ENCODE measurements at regions of chr15 and their contacts with region 1.

Region 1: DNA sequence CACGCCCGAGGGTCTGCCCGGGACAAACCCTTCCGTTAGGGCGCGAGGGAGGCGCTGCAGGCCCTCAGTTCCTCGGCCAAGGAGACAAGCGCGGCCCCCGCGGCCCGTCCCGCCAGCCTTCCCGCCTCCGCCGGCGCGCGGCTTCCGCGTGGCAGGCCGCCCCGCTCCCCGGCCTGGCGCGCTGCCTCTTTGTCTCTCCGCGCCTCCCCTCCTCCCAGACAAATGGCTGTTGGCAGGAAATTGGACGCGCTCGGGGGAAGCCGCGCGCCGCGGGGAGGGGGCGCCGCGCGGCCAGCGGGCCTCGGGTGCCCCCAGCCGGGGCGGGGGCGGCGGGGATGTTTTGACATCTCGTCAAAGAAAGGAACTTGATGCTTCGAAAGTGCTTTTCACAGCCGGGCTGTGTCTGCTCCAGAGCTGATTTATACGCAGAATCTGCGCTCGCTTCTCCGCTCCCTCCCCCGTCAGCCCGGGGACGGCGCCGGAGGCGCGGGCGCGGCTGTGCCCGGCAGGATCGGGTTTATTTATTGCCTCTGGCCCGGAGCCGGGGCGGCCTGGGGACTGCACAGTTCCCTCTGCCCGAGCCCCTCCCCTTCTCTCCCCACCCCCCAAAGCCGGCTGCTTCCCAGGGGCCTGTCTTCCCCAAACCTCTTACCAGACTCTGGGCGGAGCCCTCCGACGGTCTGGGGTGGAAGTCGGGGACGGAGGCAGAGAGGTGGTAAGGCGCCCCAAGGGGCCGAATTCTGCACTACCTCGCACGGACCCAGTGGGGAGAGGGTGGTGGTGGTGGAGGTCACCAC is 20.7 kb downstream of the SHF start:
- DNase-seq: peak; percentile 66 to 87 (median 76)
- H3K4me3 ChIP-seq: peak overlapping the region; percentile 78
- H3K4me3 Mint-ChIP-seq: peak overlapping the region; percentile 67 to 91 (median 80)
- H3K27ac ChIP-seq: peak overlapping the region; percentile 85
- H3K27ac Mint-ChIP-seq: peak overlapping the region; percentile 67 to 89 (median 84)
- H3K4me1 ChIP-seq: peaks cover 15% of the 10 kb centered on the region
- H3K4me1 Mint-ChIP-seq: peaks cover 9 to 22% (median 21%) of the 10 kb centered on the region in 3 donors
- H3K27me3 ChIP-seq: no peaks in the 10 kb centered on the region
- H3K27me3 Mint-ChIP-seq: no peaks in the 10 kb centered on the region

Region 2: GRCh38 chr15:44956388-44956787 is 210.6 kb before region 1 on chr15 and contains the start of gene TERB2:
- CTCF ChIA-PET with region 1: no interaction called
- POLR2A ChIA-PET with region 1: no interaction called
- DNase-seq: no peak
- H3K4me3 ChIP-seq: no peak within 1 kb of the TSS
- H3K4me3 Mint-ChIP-seq: no peak within 1 kb of the TSS
- H3K27ac ChIP-seq: no peak within 1 kb of the TSS
- H3K27ac Mint-ChIP-seq: peak within 1 kb of the TSS in 1 of 8 donors; percentile 44
- H3K4me1 ChIP-seq: no peaks in the 10 kb centered on the region
- H3K4me1 Mint-ChIP-seq: no peaks in the 10 kb centered on the region
- H3K27me3 ChIP-seq: no peaks in the 10 kb centered on the region
- H3K27me3 Mint-ChIP-seq: peaks cover 3 to 4% of the 10 kb centered on the region in 2 donors
- total RNA-seq, gene TERB2: not detected

Region 3: GRCh38 chr15:45179221-45179985 is 12.4 kb after region 1 on chr15:
- CTCF ChIA-PET with region 1: interaction called, 19 read pairs
- POLR2A ChIA-PET with region 1: interaction called, 4 read pairs
- DNase-seq: peak; percentile 33 to 73 (median 38)
- H3K4me3 ChIP-seq: no peak overlapping the region
- H3K4me3 Mint-ChIP-seq: no peak overlapping the region
- H3K27ac ChIP-seq: no peak overlapping the region
- H3K27ac Mint-ChIP-seq: peak overlapping the region in 4 of 8 donors; percentile 16 to 40 (median 22)
- H3K4me1 ChIP-seq: peaks cover 7% of the 10 kb centered on the region
- H3K4me1 Mint-ChIP-seq: peaks cover 11 to 15% (median 14%) of the 10 kb centered on the region in 3 donors
- H3K27me3 ChIP-seq: no peaks in the 10 kb centered on the region
- H3K27me3 Mint-ChIP-seq: no peaks in the 10 kb centered on the region

Region 4: DNA sequence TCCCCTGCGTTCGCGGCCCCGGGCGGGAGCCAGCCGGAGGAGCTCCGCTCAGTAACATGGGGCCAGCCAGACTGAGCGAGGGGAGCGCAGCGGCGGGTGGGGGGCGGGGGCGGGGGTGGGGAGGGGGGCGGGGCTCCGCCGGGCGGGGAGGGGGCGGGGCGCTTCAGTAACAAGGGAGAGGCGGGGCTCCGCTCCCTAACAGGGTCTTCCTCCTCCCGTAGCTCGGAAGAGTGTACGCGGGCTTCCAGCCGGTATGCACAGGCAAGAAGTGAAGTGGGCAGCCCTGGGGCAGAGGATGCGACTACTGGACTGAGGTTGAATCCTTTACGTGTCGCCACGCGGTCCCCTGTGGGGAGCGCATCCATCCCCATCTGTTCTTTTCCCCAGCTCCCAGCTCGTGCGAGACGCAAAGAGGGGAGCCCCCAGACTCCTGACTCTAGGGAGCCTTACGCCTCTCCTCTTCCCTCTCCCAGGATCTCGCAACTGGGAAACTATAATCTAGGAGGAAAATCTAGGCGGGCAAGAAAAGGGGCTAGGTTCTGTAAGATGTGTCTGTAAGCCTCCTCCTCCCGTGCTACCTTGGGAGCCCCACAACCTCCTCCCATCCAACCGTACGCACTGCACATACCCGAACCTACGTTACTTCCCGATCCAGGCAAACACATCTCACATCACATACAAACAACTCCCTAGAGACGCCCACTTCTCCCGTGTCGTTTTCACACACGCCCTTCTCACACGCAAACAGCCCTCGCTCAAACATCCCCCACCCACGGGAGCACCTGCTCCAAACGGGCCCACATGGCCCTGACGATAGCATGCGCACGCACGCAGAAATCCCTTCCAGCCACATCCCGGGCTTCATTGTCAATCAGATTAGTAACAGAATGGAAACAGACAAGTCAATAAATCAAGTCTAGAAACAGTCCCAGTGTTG is 21.1 kb after region 1 on chr15 and contains the start of gene SHF:
- CTCF ChIA-PET with region 1: interaction called, 13 read pairs
- POLR2A ChIA-PET with region 1: interaction called, 3 read pairs
- DNase-seq: peak; percentile 44 to 75 (median 53)
- H3K4me3 ChIP-seq: peak within 1 kb of the TSS; percentile 65
- H3K4me3 Mint-ChIP-seq: peak within 1 kb of the TSS; percentile 84 to 96 (median 93)
- H3K27ac ChIP-seq: peak within 1 kb of the TSS; percentile 41
- H3K27ac Mint-ChIP-seq: peak within 1 kb of the TSS; percentile 59 to 96 (median 87)
- H3K4me1 ChIP-seq: peaks cover 11% of the 10 kb centered on the region
- H3K4me1 Mint-ChIP-seq: peaks cover 11 to 21% (median 15%) of the 10 kb centered on the region in 3 donors
- H3K27me3 ChIP-seq: no peaks in the 10 kb centered on the region
- H3K27me3 Mint-ChIP-seq: peaks cover 13 to 14% of the 10 kb centered on the region in 2 donors
- total RNA-seq, gene SHF: 25.4 to 29.5 TPM

Region 5: DNA sequence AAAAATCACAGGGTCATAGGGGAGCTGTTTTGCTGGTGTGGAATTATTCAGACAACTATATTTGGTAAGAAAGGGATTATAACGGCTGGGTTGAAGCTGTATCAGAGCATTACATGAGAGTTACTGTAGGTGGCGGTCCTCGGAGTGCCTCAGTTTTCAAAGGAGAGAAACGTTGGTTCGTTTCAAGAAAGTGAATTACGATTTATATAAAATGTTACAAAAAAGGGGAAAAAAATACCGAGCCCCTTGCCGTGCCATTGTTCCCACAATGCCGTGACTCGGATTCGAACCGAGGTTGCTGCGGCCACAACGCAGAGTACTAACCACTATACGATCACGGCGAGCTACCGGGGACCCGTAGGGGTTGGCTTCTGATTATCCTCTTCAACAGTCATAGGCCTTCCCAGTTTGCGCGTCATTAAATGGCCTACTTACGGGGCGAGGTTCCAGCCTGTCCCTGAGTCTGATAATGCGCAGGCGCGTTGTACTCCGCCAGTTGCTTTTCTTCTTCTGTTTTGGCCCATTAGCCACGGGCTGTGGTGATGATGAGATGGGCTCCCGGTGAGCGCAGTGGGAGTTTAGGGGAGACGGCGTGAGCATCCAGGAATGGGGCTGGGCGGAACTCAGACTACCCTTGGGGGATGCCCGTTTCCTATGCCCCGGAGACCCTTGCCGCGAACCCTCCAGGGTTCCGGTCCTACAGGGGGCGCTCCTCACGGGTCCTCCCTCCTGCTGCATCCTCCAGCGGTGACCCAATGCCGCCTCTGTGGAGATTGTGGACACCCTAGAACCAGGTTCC is 31.5 kb after region 1 on chr15:
- CTCF ChIA-PET with region 1: interaction called, 14 read pairs
- POLR2A ChIA-PET with region 1: interaction called, 14 read pairs
- DNase-seq: peak; percentile 83 to 98 (median 97)
- H3K4me3 ChIP-seq: peak overlapping the region; percentile 94
- H3K4me3 Mint-ChIP-seq: no peak overlapping the region
- H3K27ac ChIP-seq: peak overlapping the region; percentile 94
- H3K27ac Mint-ChIP-seq: peak overlapping the region in 1 of 8 donors; percentile 60
- H3K4me1 ChIP-seq: peaks cover 16% of the 10 kb centered on the region
- H3K4me1 Mint-ChIP-seq: peaks cover 4 to 19% (median 13%) of the 10 kb centered on the region in 3 donors
- H3K27me3 ChIP-seq: no peaks in the 10 kb centered on the region
- H3K27me3 Mint-ChIP-seq: peaks cover 0 to 13% of the 10 kb centered on the region in 2 donors

Region 6: GRCh38 chr15:45205192-45205591 is 38.2 kb after region 1 on chr15:
- CTCF ChIA-PET with region 1: interaction called, 14 read pairs
- POLR2A ChIA-PET with region 1: interaction called, 14 read pairs
- DNase-seq: peak; percentile 15 to 64 (median 32)
- H3K4me3 ChIP-seq: no peak overlapping the region
- H3K4me3 Mint-ChIP-seq: peak overlapping the region in 1 of 7 donors; percentile 41
- H3K27ac ChIP-seq: no peak overlapping the region
- H3K27ac Mint-ChIP-seq: peak overlapping the region in 4 of 8 donors; percentile 16 to 58 (median 39)
- H3K4me1 ChIP-seq: peaks cover 8% of the 10 kb centered on the region
- H3K4me1 Mint-ChIP-seq: peaks cover 0 to 3% (median 0%) of the 10 kb centered on the region in 3 donors
- H3K27me3 ChIP-seq: no peaks in the 10 kb centered on the region
- H3K27me3 Mint-ChIP-seq: peaks cover 12 to 24% of the 10 kb centered on the region in 2 donors

Region 7: GRCh38 chr15:45276831-45277230 is 109.8 kb after region 1 on chr15:
- CTCF ChIA-PET with region 1: interaction called, 10 read pairs
- POLR2A ChIA-PET with region 1: no interaction called
- DNase-seq: peak in 2 of 5 donors; percentile 11 to 28
- H3K4me3 ChIP-seq: no peak overlapping the region
- H3K4me3 Mint-ChIP-seq: peak overlapping the region in 1 of 7 donors; percentile 63
- H3K27ac ChIP-seq: no peak overlapping the region
- H3K27ac Mint-ChIP-seq: peak overlapping the region in 1 of 8 donors; percentile 44
- H3K4me1 ChIP-seq: peaks cover 5% of the 10 kb centered on the region
- H3K4me1 Mint-ChIP-seq: peaks cover 16 to 29% (median 19%) of the 10 kb centered on the region in 3 donors
- H3K27me3 ChIP-seq: no peaks in the 10 kb centered on the region
- H3K27me3 Mint-ChIP-seq: peaks cover 0 to 3% of the 10 kb centered on the region in 2 donors

Region 8: DNA sequence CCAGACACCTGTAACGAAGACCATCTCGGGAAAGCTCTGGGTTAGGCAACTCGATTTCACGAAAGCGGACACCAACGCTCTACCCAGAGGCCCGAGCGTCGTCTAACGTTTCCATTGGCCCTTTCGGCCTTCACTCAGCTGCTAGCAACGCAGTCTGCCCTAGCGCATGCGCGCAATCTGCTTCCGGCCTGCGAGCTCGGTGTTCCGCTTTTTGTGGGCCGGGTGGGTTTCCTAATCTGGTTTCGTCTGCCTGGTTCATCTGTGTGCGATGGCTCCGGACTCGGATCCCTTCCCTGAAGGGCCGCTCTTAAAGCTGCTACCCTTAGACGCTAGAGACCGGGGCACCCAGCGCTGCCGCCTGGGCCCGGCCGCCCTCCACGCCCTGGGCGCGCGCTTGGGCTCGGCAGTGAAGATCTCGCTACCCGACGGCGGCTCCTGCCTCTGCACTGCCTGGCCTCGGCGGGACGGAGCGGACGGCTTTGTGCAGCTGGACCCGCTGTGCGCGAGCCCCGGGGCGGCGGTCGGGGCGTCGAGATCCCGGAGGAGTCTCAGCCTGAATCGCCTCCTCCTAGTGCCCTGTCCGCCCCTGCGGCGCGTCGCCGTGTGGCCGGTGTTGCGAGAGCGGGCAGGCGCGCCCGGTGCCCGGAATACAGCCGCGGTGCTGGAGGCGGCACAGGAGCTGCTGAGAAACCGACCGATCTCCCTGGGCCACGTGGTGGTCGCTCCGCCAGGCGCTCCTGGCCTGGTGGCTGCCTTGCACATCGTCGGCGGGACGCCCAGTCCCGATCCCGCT is 235.3 kb after region 1 on chr15:
- CTCF ChIA-PET with region 1: interaction called, 19 read pairs
- POLR2A ChIA-PET with region 1: no interaction called
- DNase-seq: peak; percentile 89 to 97 (median 93)
- H3K4me3 ChIP-seq: peak overlapping the region; percentile 83
- H3K4me3 Mint-ChIP-seq: peak overlapping the region; percentile 92 to 97 (median 96)
- H3K27ac ChIP-seq: peak overlapping the region; percentile 80
- H3K27ac Mint-ChIP-seq: peak overlapping the region; percentile 93 to 99 (median 97)
- H3K4me1 ChIP-seq: peaks cover 21% of the 10 kb centered on the region
- H3K4me1 Mint-ChIP-seq: peaks cover 32 to 45% (median 42%) of the 10 kb centered on the region in 3 donors
- H3K27me3 ChIP-seq: no peaks in the 10 kb centered on the region
- H3K27me3 Mint-ChIP-seq: peaks cover 0 to 3% of the 10 kb centered on the region in 2 donors